ENCODE measurements at regions of chr21 and their contacts with region 1.

Region 1: GRCh38 chr21:28745131-28746016 is 247.3 kb downstream of the LTN1 start:
- DNase-seq: peak; percentile 85
- H3K4me3 ChIP-seq: peak overlapping the region; percentile 38 to 75 (median 51)
- H3K27ac ChIP-seq: peak overlapping the region; percentile 68
- H3K4me1 ChIP-seq: peaks cover 7% of the 10 kb centered on the region
- H3K27me3 ChIP-seq: no peaks in the 10 kb centered on the region
- CTCF ChIP-seq: peak; percentile 77 to 78
- POLR2A ChIP-seq: no peak

Region 2: GRCh38 chr21:26814374-26814773 is 1931.0 kb before region 1 on chr21:
- CTCF ChIA-PET with region 1: interaction called, 23 read pairs
- POLR2A ChIA-PET with region 1: no interaction called
- dilution Hi-C with region 1: no loop called
- intact Hi-C with region 1: loop called (anchors 1 kb)
- DNase-seq: no peak
- H3K4me3 ChIP-seq: no peak overlapping the region
- H3K27ac ChIP-seq: no peak overlapping the region
- H3K4me1 ChIP-seq: no peaks in the 10 kb centered on the region
- H3K27me3 ChIP-seq: peaks cover 2% of the 10 kb centered on the region in 2 experiments
- CTCF ChIP-seq: no peak
- POLR2A ChIP-seq: no peak

Region 3: DNA sequence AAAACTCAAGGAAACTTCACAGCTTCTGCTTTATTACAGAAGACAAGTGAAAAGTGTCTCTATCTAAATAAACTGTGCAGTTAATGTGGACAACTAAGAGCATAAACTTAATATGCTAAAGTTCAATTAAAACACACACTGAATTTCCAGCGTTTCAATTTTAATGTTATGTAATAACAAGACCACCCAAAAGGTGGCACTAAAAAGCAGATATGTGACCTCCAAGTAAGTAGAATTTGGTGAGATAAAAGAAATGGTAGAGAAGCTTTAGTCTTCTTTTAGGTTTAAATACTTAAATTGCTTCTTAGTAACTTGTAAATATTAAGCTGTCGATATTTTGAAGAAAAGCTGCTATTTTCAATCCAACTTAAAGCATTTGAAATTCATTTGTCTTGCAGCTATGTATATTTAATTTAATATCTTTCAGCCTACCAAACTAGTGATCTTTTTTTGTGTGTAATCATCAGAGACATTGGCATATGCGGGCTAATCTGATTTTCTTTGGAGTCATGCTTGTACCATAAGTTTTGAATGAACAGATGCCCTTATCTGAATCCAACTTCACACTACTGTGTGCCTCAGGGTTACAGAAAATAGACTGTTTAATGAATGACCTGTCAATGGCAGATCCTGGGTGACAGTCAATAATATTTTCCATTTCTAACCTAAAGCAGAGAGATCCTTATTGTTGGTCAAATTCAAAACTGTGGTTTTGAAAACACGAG is 1863.7 kb before region 1 on chr21:
- CTCF ChIA-PET with region 1: interaction called, 35 read pairs
- POLR2A ChIA-PET with region 1: interaction called, 7 read pairs
- dilution Hi-C with region 1: no loop called
- intact Hi-C with region 1: loop called (anchors 1 kb)
- DNase-seq: peak; percentile 39
- H3K4me3 ChIP-seq: no peak overlapping the region
- H3K27ac ChIP-seq: no peak overlapping the region
- H3K4me1 ChIP-seq: no peaks in the 10 kb centered on the region
- H3K27me3 ChIP-seq: no peaks in the 10 kb centered on the region
- CTCF ChIP-seq: peak in 1 of 2 donors; percentile 2
- POLR2A ChIP-seq: no peak

Region 4: DNA sequence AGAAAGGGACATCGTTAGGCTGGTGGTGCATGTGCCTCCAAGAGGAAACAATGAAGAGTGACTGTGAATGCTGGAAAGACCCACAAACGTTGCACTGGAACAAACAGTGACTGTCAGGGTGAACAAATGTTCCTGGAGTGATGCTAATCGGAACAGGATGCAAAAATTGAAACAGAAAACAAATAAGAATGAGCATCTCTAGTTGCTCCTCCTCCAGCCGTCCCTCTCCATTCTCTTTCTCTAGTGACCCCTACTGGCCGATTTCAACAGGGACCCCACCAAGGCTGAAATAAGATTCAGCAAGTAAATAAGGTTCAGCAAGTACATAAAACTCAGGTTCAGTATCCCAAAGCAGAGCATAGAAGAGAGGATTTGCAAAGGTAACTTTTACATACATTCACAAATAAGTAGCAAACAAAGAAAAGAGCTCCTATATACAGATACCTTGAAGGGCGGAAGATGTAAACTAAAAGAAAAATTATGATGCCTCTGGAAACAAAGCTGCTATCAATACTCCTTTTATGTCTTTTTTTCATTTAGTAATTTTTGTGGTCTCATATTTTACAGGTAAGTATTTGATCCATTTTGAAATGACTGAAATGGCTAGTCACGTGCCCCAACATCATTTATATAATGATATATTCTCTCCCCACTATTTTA is 942.4 kb before region 1 on chr21:
- CTCF ChIA-PET with region 1: interaction called, 3 read pairs
- POLR2A ChIA-PET with region 1: no interaction called
- dilution Hi-C with region 1: no loop called
- intact Hi-C with region 1: loop called (anchors 1 kb)
- DNase-seq: peak; percentile 39
- H3K4me3 ChIP-seq: no peak overlapping the region
- H3K27ac ChIP-seq: no peak overlapping the region
- H3K4me1 ChIP-seq: no peaks in the 10 kb centered on the region
- H3K27me3 ChIP-seq: no peaks in the 10 kb centered on the region
- CTCF ChIP-seq: peak; percentile 55 to 65
- POLR2A ChIP-seq: no peak

Region 5: GRCh38 chr21:28509031-28509430 is 236.3 kb before region 1 on chr21:
- CTCF ChIA-PET with region 1: interaction called, 75 read pairs
- POLR2A ChIA-PET with region 1: no interaction called
- dilution Hi-C with region 1: no loop called
- intact Hi-C with region 1: no loop called
- DNase-seq: no peak
- H3K4me3 ChIP-seq: no peak overlapping the region
- H3K27ac ChIP-seq: no peak overlapping the region
- H3K4me1 ChIP-seq: no peaks in the 10 kb centered on the region
- H3K27me3 ChIP-seq: no peaks in the 10 kb centered on the region
- CTCF ChIP-seq: no peak
- POLR2A ChIP-seq: no peak

Region 6: GRCh38 chr21:28633839-28634555 is 111.4 kb before region 1 on chr21:
- CTCF ChIA-PET with region 1: interaction called, 11 read pairs
- POLR2A ChIA-PET with region 1: no interaction called
- dilution Hi-C with region 1: no loop called
- intact Hi-C with region 1: loop called (anchors 1 kb)
- DNase-seq: peak; percentile 94
- H3K4me3 ChIP-seq: peak overlapping the region in 1 of 3 experiments; percentile 1
- H3K27ac ChIP-seq: peak overlapping the region; percentile 97
- H3K4me1 ChIP-seq: peaks cover 59% of the 10 kb centered on the region
- H3K27me3 ChIP-seq: no peaks in the 10 kb centered on the region
- CTCF ChIP-seq: no peak
- POLR2A ChIP-seq: peak; percentile 12

Region 7: DNA sequence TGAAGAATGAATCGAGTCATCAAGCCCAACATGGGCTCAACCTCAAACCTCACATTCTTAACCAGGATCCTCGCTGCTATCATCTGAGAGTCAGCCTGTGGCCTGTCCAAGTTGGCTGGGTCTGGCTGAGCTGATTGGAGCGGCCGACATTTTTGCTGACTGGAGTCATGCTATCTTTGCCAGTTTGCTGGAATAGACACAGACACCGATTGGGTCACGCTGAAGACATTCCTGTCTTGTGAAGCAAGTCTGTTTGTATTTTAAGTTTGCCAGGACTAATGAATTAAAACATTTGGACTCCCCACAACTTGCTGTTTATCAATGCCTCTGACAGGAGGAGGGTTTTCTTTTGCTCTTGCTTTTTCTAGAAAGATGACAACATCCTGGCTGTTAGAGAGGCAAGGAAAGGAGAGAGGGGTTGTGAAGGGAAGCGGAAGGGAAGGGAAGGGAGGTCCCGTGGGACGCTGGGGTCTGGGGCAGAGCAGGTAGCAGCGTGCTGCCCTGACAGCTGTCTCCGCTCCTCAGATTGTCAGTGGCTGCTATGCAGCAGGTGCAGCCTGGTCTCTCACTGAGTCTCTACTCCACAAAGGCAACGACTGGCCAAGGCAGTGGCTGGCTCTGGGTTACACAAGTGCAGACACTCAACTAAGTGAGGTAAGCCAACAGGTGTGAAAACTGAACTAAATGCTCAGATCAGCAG is 385.0 kb after region 1 on chr21 and contains the start of gene MAP3K7CL:
- CTCF ChIA-PET with region 1: no interaction called
- POLR2A ChIA-PET with region 1: no interaction called
- dilution Hi-C with region 1: no loop called
- intact Hi-C with region 1: no loop called
- DNase-seq: no peak
- H3K4me3 ChIP-seq: no peak within 1 kb of the TSS
- H3K27ac ChIP-seq: no peak within 1 kb of the TSS
- H3K4me1 ChIP-seq: no peaks in the 10 kb centered on the region
- H3K27me3 ChIP-seq: no peaks in the 10 kb centered on the region
- CTCF ChIP-seq: no peak
- POLR2A ChIP-seq: no peak
- total RNA-seq, gene MAP3K7CL: 8.1 and 10.9 TPM in 2 replicates

Region 8: GRCh38 chr21:29786496-29787360 is 1041.4 kb after region 1 on chr21:
- CTCF ChIA-PET with region 1: no interaction called
- POLR2A ChIA-PET with region 1: no interaction called
- dilution Hi-C with region 1: no loop called
- intact Hi-C with region 1: no loop called
- DNase-seq: no peak
- H3K4me3 ChIP-seq: no peak overlapping the region
- H3K27ac ChIP-seq: no peak overlapping the region
- H3K4me1 ChIP-seq: no peaks in the 10 kb centered on the region
- H3K27me3 ChIP-seq: no peaks in the 10 kb centered on the region
- CTCF ChIP-seq: no peak
- POLR2A ChIP-seq: no peak

Measured in endothelial cell of umbilical vein (primary cell).